ENCODE measurements at regions of chr19 and their contacts with region 1.

Region 1: DNA sequence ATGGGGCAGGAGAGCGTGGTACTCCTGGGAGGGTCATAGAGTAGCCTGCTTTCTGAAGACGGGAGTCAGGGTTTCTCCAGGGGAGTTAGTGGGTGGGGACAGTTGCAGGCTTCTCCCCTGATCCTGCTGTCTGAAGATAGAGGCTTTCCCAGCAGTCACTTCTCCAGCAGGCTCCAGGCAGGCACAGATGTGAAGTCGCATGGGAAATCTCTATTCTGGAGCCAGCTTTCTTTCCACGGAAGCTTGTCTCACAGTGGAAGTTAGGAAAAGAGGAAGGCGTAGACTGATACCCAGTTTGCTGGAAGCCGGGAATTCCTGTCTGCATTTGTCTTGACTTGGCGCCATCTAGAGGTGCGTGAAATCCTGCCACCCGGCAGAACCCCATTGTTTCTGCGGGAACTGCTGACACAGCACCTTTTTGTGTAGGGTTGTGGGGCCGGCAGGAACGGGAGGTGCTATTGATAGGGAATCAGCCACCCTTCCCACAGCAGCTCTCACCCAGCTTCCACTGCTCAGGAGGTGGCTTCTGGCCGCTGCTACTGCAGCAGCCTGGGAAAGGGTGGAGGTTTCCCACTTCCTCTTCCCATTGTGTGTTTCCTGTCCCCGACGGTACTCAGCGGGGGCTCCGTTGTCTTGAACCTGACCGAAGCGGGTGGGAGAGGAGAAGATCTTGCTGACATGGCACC is 28.5 kb upstream of the NPAS1 start:
- DNase-seq: peak; percentile 78 to 91
- ATAC-seq: peak; percentile 51 to 84 (median 73)
- H3K4me3 ChIP-seq: peak overlapping the region in 3 of 10 donors; percentile 9 to 24 (median 12)
- H3K27ac ChIP-seq: peak overlapping the region; percentile 76 to 87 (median 84)
- H3K4me1 ChIP-seq: peaks cover 24 to 83% (median 67%) of the 10 kb centered on the region in 9 donors
- H3K27me3 ChIP-seq: no peaks in the 10 kb centered on the region
- CTCF ChIP-seq: peak; percentile 73 to 96 (median 90)

Region 2: DNA sequence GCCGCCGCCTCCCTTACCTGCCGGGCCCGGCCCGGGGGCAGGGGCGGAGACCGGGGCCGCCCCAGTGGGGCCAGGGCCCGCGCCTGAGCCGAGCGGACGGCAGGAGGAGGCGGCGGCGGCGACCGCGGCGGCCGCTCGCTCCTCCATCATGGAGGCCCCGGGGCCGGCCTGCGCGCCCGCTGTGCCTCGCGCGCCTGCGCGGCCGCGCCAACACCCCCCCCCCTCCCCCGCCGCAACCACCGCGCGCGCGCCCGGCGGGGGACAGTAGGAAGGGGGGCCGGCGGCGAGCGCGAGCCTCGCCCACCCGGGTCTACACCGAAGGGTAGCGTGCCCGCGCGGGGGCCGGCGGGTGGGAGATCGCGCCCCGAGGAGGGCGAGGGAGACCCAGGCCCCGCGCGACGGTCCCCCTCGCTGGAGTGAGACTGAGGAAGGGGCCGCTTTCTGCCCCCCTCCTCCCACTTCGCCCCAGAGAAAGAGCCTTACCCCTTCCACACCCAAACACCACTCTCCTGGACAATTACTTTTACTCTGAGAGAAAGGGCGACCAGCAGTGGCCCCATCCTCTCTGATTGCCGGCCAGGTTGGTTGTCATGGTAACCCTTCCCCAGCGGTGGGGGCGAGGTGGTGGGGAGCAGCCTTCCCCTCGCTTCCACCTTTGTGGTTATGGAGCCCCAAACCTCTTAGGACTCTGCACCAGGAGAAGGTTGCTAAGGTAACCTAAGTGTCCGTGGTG is 244.7 kb before region 1 on chr19 and contains the start of gene STRN4:
- intact Hi-C with region 1: loop called in 7 of 10 experiments (anchors 10 kb)
- DNase-seq: peak in 1 of 2 donors; percentile 63
- ATAC-seq: peak; percentile 34 to 85 (median 59)
- H3K4me3 ChIP-seq: peak within 1 kb of the TSS; percentile 79 to 99 (median 96)
- H3K27ac ChIP-seq: peak within 1 kb of the TSS; percentile 83 to 98 (median 94)
- H3K4me1 ChIP-seq: peaks cover under 1 to 53% (median 44%) of the 10 kb centered on the region in 9 donors
- H3K27me3 ChIP-seq: no peaks in the 10 kb centered on the region
- CTCF ChIP-seq: no peak
- total RNA-seq, gene STRN4: 43.3 to 56.1 (median 50.0) TPM

Region 3: DNA sequence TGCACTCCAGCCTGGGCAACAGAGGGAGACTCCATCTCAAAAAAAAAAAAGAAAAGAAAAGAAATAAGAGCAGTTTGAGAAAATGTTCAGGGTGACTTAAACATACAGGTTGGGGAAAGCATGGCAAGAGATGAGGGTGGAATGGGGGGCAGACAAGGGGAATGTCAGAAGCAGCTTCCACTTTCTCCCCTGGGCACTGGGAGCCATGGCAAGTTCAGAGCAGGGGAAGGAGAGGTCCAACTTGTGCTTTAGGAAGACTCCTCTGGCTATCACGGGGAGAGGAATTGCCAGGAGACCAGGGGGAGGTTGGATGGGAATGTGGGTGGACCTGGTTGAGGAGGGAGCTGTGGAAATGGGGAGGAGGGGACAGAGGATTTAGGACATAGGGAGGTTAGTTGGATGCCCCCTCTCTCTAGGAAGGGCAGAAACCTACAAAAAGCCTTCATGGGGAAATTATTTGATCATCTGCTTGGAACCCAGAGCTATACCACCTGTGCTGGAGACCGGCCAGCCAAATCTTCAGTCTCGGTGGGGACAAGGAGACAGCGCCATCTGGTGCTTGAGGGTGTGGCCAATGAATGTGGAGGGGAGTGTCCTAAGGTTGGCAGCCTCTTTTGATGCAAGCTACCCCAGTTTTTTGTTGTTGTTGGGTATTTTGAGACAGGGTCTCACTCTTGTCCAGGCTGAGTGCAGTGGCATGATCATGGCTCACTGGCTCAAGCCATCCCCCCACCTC is 237.5 kb before region 1 on chr19:
- intact Hi-C with region 1: loop called in 9 of 10 experiments (anchors 5 to 10 kb)
- DNase-seq: peak in 1 of 2 donors; percentile 52
- ATAC-seq: peak in 2 of 8 donors; percentile 16 to 20
- H3K4me3 ChIP-seq: no peak overlapping the region
- H3K27ac ChIP-seq: no peak overlapping the region
- H3K4me1 ChIP-seq: peaks cover 0 to 29% (median 4%) of the 10 kb centered on the region in 9 donors
- H3K27me3 ChIP-seq: no peaks in the 10 kb centered on the region
- CTCF ChIP-seq: peak in 7 of 9 donors; percentile 43 to 65 (median 53)

Region 4: GRCh38 chr19:46759817-46760333 is 231.3 kb before region 1 on chr19:
- intact Hi-C with region 1: loop called in 9 of 10 experiments (anchors 5 to 10 kb)
- DNase-seq: no peak
- ATAC-seq: peak in 1 of 8 donors; percentile 22
- H3K4me3 ChIP-seq: no peak overlapping the region
- H3K27ac ChIP-seq: no peak overlapping the region
- H3K4me1 ChIP-seq: peaks cover 0 to 39% (median 8%) of the 10 kb centered on the region in 9 donors
- H3K27me3 ChIP-seq: no peaks in the 10 kb centered on the region
- CTCF ChIP-seq: no peak

Region 5: GRCh38 chr19:46766569-46767317 is 224.4 kb before region 1 on chr19:
- intact Hi-C with region 1: loop called in 1 of 10 experiments (anchors 10 kb)
- DNase-seq: no peak
- ATAC-seq: peak in 3 of 8 donors; percentile 18 to 51 (median 36)
- H3K4me3 ChIP-seq: no peak overlapping the region
- H3K27ac ChIP-seq: no peak overlapping the region
- H3K4me1 ChIP-seq: peaks cover 0 to 17% (median 4%) of the 10 kb centered on the region in 9 donors
- H3K27me3 ChIP-seq: no peaks in the 10 kb centered on the region
- CTCF ChIP-seq: peak; percentile 32 to 76 (median 59)

Region 6: DNA sequence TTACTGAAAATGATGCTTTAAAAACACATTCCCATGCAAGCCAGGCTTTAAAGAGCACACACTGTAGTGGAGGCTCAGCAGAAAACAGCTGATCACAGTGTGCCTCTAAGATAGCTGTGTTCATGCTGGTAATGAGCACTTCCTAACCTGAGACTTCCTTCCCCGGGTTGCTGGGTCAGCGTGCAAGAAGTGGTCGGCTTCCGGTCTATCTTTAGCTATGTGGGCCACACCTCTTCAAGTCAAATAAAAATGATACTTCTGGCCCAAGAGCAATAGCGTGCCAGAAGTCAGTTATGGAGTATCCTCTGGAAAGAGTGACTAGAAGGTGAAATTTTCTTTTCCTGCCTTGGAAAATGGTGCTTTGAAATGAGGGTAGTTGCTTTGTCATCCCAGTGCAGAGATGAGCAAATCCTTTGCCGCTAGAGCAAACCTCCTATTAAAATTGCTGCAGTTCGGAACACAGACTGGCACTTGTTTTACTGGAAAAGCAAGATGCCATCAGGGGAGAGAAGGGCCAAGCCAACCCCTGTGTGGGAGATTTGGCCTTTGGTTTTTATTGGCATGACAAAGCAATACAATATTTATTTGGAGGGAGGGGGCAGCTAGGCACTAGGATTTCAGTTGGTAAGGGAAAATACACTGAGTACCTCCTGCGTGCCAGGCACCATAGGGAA is 66.1 kb before region 1 on chr19:
- intact Hi-C with region 1: loop called in 3 of 10 experiments (anchors 1 to 10 kb)
- DNase-seq: peak in 1 of 2 donors; percentile 27
- ATAC-seq: peak; percentile 44 to 80 (median 70)
- H3K4me3 ChIP-seq: peak overlapping the region in 1 of 10 donors; percentile 4
- H3K27ac ChIP-seq: peak overlapping the region in 9 of 10 donors; percentile 22 to 80 (median 54)
- H3K4me1 ChIP-seq: peaks cover 13 to 68% (median 60%) of the 10 kb centered on the region in 9 donors
- H3K27me3 ChIP-seq: no peaks in the 10 kb centered on the region
- CTCF ChIP-seq: no peak

Measured in heart right ventricle (tissue), 16 donors.